ENCODE measurements at regions of chr1 and their contacts with region 1.

Region 1: DNA sequence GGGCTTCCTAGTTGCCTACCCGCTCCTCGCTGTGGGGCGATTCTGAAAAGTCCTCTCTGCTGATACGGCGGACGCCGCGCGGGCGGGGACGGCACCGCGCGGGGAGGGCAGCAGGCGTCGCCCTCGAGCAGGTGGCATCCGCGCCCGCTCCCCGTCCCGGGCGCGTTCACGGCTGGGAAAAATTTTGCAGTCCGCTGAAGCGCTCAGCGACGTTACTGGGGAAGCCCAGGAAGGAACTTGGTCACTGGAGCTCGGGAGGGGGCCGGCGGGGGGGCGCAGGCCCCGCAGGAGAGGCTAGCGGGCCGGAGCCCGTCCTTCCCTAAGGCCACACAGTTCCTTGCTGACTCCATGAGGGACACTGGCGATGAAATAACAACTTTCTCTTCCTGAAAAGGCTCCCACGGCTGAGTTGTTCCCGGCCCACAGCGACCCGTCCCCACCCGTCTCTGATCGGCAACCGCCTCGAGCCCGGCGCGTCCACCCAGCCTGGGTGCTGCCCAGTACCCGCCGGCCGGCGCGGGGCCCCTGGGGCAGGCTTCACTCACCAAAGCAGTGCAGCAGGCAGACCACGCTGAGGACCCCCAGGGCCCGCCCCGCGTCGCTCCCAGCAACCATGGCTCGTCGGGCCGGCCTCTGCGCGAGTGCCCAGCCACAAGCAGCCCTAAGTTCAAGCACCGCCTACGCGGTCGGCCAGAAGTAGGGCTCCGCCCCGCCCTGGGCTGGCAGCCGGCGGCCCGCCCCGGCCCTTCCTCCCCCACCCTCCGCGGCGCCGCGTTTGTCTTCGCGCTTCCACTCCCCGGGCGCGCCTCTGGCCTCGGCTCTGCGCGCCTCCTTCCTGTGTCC is at the start of gene CD58:
- DNase-seq: no peak
- H3K4me3 ChIP-seq: peak within 1 kb of the TSS; percentile 73
- CTCF ChIP-seq: peak; percentile 79

Region 2: GRCh38 chr1:116448813-116449281 is 121.7 kb before region 1 on chr1:
- CTCF ChIA-PET with region 1: no interaction called
- POLR2A ChIA-PET with region 1: no interaction called
- DNase-seq: no peak
- H3K4me3 ChIP-seq: no peak overlapping the region
- CTCF ChIP-seq: no peak

Region 3: GRCh38 chr1:116586741-116587143 is 16.2 kb after region 1 on chr1:
- CTCF ChIA-PET with region 1: interaction called, 53 read pairs
- POLR2A ChIA-PET with region 1: interaction called, 3 read pairs
- DNase-seq: no peak
- H3K4me3 ChIP-seq: no peak overlapping the region
- CTCF ChIP-seq: no peak

Measured in AG04449 (cell line).